Caco-2 (cell line): ENCODE measurements at regions of chr17 and their contacts with region 1.

Region 1: GRCh38 chr17:59870482-59870881 is 22.3 kb downstream of the TUBD1 start:
- DNase-seq: no peak
- H3K4me3 ChIP-seq: no peak overlapping the region
- H3K4me3 Mint-ChIP-seq: no peak overlapping the region
- H3K27ac Mint-ChIP-seq: no peak overlapping the region
- H3K4me1 ChIP-seq: peaks cover 17% of the 10 kb centered on the region
- H3K4me1 Mint-ChIP-seq: peaks cover 14% of the 10 kb centered on the region
- H3K27me3 ChIP-seq: no peaks in the 10 kb centered on the region
- H3K27me3 Mint-ChIP-seq: no peaks in the 10 kb centered on the region
- CTCF ChIP-seq: no peak

Region 2: GRCh38 chr17:58369214-58370031 is 1501.1 kb before region 1 on chr17:
- CTCF ChIA-PET with region 1: interaction called, 10 read pairs
- POLR2A ChIA-PET with region 1: no interaction called
- intact Hi-C with region 1: no loop called
- DNase-seq: peak; percentile 71 to 77
- H3K4me3 ChIP-seq: no peak overlapping the region
- H3K4me3 Mint-ChIP-seq: peak overlapping the region; percentile 43
- H3K27ac Mint-ChIP-seq: peak overlapping the region; percentile 87
- H3K4me1 ChIP-seq: peaks cover 88% of the 10 kb centered on the region
- H3K4me1 Mint-ChIP-seq: peaks cover 74% of the 10 kb centered on the region
- H3K27me3 ChIP-seq: no peaks in the 10 kb centered on the region
- H3K27me3 Mint-ChIP-seq: no peaks in the 10 kb centered on the region
- CTCF ChIP-seq: no peak

Region 3: GRCh38 chr17:59884861-59885260 is 14.4 kb after region 1 on chr17:
- CTCF ChIA-PET with region 1: no interaction called
- POLR2A ChIA-PET with region 1: no interaction called
- intact Hi-C with region 1: no loop called
- DNase-seq: no peak
- H3K4me3 ChIP-seq: no peak overlapping the region
- H3K4me3 Mint-ChIP-seq: no peak overlapping the region
- H3K27ac Mint-ChIP-seq: no peak overlapping the region
- H3K4me1 ChIP-seq: no peaks in the 10 kb centered on the region
- H3K4me1 Mint-ChIP-seq: peaks cover 12% of the 10 kb centered on the region
- H3K27me3 ChIP-seq: no peaks in the 10 kb centered on the region
- H3K27me3 Mint-ChIP-seq: no peaks in the 10 kb centered on the region
- CTCF ChIP-seq: no peak

Region 4: GRCh38 chr17:59918975-59919530 is 48.6 kb after region 1 on chr17:
- CTCF ChIA-PET with region 1: no interaction called
- POLR2A ChIA-PET with region 1: no interaction called
- intact Hi-C with region 1: no loop called
- DNase-seq: no peak
- H3K4me3 ChIP-seq: no peak overlapping the region
- H3K4me3 Mint-ChIP-seq: no peak overlapping the region
- H3K27ac Mint-ChIP-seq: no peak overlapping the region
- H3K4me1 ChIP-seq: no peaks in the 10 kb centered on the region
- H3K4me1 Mint-ChIP-seq: no peaks in the 10 kb centered on the region
- H3K27me3 ChIP-seq: no peaks in the 10 kb centered on the region
- H3K27me3 Mint-ChIP-seq: no peaks in the 10 kb centered on the region
- CTCF ChIP-seq: no peak

Region 5: GRCh38 chr17:60249290-60249826 is 378.9 kb after region 1 on chr17:
- CTCF ChIA-PET with region 1: no interaction called
- POLR2A ChIA-PET with region 1: no interaction called
- intact Hi-C with region 1: no loop called
- DNase-seq: no peak
- H3K4me3 ChIP-seq: no peak overlapping the region
- H3K4me3 Mint-ChIP-seq: no peak overlapping the region
- H3K27ac Mint-ChIP-seq: no peak overlapping the region
- H3K4me1 ChIP-seq: no peaks in the 10 kb centered on the region
- H3K4me1 Mint-ChIP-seq: no peaks in the 10 kb centered on the region
- H3K27me3 ChIP-seq: no peaks in the 10 kb centered on the region
- H3K27me3 Mint-ChIP-seq: no peaks in the 10 kb centered on the region
- CTCF ChIP-seq: no peak